ENCODE measurements at regions of chr5 and their contacts with region 1.

Region 1: DNA sequence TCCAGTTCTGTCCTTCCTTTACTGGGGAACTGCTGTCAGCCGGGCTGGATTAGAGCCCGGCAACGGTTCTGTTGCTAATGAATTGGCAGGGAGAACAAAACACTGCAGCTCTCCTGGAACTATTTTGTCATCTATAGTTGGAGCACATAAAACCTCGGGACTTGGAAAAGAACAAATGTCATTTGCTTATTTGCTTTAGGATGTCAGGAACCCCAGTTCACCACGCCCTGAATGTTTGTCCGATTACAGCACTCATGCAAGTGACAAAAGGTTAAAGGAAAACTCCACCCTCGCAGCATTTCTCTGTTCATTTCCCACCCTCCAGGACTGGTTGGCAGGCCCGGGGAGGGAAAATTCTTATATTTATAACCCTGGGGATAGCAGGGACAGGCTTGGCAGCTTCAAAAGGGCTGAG is 66.4 kb upstream of the PLPP1 start:
- DNase-seq: peak; percentile 45 to 93 (median 69)

Region 2: GRCh38 chr5:55324815-55325418 is 276.3 kb before region 1 on chr5:
- intact Hi-C with region 1: loop called (anchors 5 kb)
- DNase-seq: no peak

Region 3: DNA sequence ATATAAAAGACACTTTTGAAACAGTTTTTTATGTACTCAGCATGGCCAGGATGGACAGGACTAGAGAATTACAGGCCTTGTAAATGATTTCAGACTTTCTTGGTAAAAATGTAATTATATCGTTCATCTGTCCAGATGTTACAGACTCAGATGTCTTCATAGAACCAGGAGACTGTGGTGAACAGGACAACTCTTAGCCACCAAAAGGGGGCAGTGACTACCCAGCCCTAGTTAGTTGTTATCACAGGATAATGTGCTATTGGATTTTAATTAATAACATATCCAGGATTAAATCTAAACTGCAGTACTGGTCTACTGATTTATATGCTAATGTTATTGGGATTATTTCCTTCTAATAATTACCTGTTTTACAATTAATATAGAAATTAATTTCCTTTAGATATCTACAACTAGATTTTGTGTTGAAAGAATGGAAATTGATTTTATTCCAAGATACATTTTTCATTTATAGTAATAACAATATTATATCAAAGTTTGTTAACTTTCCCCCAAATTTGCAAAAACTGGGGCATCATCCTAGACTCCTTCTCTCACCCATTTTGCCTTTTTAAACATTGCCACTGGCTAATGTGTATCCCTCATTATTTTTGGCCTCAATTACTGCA is 194.0 kb before region 1 on chr5:
- intact Hi-C with region 1: loop called (anchors 2 kb)
- DNase-seq: peak in 2 of 10 donors; percentile 58 to 85

Region 4: DNA sequence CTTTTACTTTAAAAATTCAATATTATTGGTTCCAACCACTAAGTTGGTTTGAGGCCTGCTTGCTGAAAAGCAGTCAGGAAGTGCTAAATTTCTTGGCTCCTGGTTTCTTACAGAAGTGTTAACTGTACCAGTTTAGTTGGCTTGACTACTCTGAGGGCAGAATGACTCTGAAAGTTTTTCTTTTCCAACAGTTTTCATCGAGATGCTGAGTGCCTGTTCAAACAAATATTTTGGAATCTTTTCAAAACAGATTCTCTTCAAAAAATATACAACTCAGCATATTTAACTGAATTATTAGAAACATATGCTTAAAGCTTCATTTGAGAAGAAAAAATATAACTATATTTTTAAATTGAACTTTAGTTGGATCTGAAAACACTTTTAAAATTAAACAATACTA is 73.9 kb after region 1 on chr5:
- intact Hi-C with region 1: loop called (anchors 10 kb)
- DNase-seq: no peak

Region 5: GRCh38 chr5:55821731-55822512 is 220.7 kb after region 1 on chr5:
- intact Hi-C with region 1: no loop called
- DNase-seq: peak in 3 of 10 donors; percentile 11 to 78 (median 73)

Measured in posterior cingulate gyrus (tissue), 11 donors.